Activated CD8-positive, alpha-beta T cell treated with anti-CD3 and anti-CD28 coated beads for 36 hours (primary cell): ENCODE measurements at regions of chr12 and their contacts with region 1.

Region 1: DNA sequence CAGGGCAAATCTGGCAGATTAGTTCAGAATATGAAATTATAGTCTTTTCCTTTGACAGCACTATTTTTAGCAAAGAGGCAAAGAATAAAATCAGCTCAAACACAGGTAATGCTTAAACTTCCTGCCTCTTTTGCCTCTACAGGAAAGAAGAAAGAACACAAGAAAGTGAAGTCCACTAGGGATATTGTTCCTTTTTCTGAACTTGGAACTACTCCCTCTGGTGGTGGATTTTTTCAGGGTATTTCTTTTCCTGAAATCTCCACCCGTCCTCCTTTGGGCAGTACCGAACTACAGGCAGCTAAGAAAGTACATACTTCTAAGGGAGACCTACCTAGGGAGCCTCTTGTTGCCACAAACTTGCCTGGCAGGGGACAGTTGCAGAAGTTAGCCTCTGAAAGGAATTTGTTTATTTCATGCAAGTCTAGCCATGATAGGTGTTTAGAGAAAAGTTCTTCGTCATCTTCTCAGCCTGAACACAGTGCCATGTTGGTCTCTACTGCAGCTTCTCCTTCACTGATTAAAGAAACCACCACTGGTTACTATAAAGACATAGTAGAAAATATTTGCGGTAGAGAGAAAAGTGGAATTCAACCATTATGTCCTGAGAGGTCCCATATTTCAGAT is 17.4 kb downstream of the TMPO start:
- DNase-seq: no peak
- ATAC-seq: peak; percentile 24
- H3K4me3 Mint-ChIP-seq: no peak overlapping the region
- H3K27ac Mint-ChIP-seq: peak overlapping the region; percentile 12
- H3K4me1 Mint-ChIP-seq: peaks cover 23% of the 10 kb centered on the region
- H3K27me3 Mint-ChIP-seq: no peaks in the 10 kb centered on the region
- CTCF ChIP-seq: peak; percentile 73

Region 2: GRCh38 chr12:98424726-98425401 is 107.9 kb before region 1 on chr12:
- CTCF ChIA-PET with region 1: interaction called, 10 read pairs
- POLR2A ChIA-PET with region 1: no interaction called
- intact Hi-C with region 1: loop called (anchors 5 kb)
- DNase-seq: peak; percentile 70
- ATAC-seq: peak; percentile 76
- H3K4me3 Mint-ChIP-seq: no peak overlapping the region
- H3K27ac Mint-ChIP-seq: no peak overlapping the region
- H3K4me1 Mint-ChIP-seq: peaks cover 4% of the 10 kb centered on the region
- H3K27me3 Mint-ChIP-seq: no peaks in the 10 kb centered on the region
- CTCF ChIP-seq: peak; percentile 82

Region 3: DNA sequence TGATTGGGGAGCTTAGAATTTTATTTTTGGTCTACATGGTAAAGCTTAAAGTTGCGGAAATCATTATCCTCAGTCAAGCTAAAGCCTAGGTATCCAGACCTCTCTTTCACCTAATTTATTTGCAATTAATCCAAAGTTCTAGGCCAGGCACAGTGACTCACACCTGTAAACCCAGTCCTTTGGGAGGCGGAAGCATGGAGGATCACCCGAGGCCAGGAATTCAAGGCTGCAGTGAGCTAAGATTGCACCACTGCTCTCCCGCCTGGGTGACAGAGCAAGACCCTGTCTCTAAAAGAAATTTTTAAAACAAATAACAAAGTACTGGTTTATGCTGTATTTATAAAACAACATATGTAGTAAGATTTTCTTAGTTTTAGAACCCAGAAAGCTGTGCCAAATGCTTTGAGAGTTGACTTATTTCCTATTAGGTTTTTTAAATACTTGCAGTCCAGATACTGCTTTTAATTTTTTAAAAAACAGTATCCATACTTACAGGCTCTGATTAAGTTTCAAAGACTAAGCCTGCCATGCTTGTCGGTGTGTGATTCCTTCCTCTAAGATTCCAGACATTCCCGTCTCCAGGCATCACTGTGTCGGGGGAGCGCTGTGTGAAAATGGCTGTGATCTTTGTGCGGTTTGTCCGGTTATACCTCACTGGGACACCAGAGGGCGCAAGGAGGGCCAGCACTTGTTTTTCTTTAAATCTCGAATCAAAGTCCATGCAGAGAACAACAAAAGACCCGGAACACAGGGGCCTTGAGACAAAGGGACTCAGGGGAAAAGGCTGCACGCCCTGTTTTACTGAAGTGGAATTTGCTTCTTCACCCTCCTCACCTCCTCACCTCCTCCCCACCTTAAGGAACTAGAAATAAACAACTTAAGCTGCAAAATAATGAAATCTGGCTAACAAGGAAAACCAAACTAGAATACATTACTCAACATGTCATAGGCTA is 42.0 kb before region 1 on chr12:
- CTCF ChIA-PET with region 1: interaction called, 37 read pairs
- POLR2A ChIA-PET with region 1: interaction called, 4 read pairs
- intact Hi-C with region 1: loop called (anchors 5 kb)
- DNase-seq: peak; percentile 90
- ATAC-seq: peak; percentile 97
- H3K4me3 Mint-ChIP-seq: peak overlapping the region; percentile 34
- H3K27ac Mint-ChIP-seq: peak overlapping the region; percentile 88
- H3K4me1 Mint-ChIP-seq: peaks cover 7% of the 10 kb centered on the region
- H3K27me3 Mint-ChIP-seq: no peaks in the 10 kb centered on the region
- CTCF ChIP-seq: peak; percentile 85

Region 4: DNA sequence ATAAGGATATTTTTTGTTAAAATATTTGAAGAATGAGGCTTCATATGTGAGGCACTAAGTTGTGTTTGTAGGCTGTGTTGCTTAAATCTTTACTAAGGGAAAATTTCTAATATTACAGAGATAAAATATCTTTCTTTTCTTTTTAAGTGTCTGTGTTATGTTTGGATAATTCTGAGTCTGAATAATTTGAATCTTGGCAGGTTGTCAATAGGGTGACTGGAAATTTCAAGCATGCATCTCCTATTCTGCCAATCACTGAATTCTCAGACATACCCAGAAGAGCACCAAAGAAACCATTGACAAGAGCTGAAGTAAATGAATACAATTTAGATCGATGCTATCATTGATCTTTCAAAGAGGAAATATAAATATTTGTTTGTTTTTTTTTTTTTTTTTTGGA is 12.0 kb after region 1 on chr12:
- CTCF ChIA-PET with region 1: interaction called, 11 read pairs
- POLR2A ChIA-PET with region 1: interaction called, 4 read pairs
- intact Hi-C with region 1: no loop called
- DNase-seq: no peak
- ATAC-seq: no peak
- H3K4me3 Mint-ChIP-seq: no peak overlapping the region
- H3K27ac Mint-ChIP-seq: no peak overlapping the region
- H3K4me1 Mint-ChIP-seq: peaks cover 14% of the 10 kb centered on the region
- H3K27me3 Mint-ChIP-seq: no peaks in the 10 kb centered on the region
- CTCF ChIP-seq: no peak

Region 5: DNA sequence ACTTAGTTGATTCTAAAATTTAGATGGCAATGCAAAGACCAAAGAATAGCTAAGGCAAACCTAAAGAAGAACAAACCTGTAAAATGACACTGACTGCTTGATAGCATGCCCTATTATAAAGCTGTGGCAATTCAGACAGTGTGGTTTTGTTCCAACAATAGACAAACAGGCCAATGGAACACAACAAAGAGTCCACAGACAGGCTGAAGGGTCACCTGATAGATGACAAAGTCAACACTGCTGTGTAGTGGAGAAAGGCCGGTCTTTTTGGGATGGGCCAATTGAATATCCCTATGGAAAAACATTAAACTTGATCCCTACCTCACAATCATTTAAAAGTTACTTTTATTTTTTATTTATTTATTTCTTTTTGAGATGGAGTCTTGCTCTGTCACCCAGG is 26.9 kb after region 1 on chr12:
- CTCF ChIA-PET with region 1: no interaction called
- POLR2A ChIA-PET with region 1: no interaction called
- intact Hi-C with region 1: no loop called
- DNase-seq: no peak
- ATAC-seq: no peak
- H3K4me3 Mint-ChIP-seq: no peak overlapping the region
- H3K27ac Mint-ChIP-seq: no peak overlapping the region
- H3K4me1 Mint-ChIP-seq: no peaks in the 10 kb centered on the region
- H3K27me3 Mint-ChIP-seq: no peaks in the 10 kb centered on the region
- CTCF ChIP-seq: no peak

Region 6: DNA sequence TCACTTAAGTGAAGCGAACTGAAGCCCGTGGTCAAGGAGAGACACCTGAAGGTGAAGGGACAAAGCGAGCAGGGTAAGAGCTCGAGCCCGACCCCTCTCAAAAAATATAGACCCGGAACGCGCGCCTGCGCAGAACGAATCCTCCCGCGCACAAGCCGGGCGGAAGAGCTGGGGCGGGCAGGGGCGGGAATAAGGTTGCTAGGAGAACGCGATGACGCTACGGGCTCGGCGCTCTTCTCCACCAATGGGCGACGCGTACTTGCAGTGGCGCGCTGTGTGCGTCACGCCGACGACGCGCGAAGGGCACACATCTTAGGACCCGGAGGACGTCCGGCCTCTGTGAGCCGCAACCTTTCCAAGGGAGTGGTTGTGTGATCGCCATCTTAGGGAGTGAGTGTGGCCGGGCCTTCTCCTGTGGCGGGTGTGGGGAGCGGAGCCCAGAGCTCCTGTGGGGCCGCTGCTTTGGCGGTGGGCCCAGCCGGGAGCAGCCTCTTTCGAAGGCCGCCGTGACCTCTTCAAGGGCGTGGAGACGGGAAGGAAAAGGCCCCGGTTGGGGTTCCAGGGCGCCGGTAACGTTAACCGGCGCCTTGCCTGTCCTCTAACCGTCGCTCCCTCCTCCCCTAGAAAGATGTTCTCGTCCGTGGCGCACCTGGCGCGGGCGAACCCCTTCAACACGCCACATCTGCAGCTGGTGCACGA is 60.7 kb after region 1 on chr12 and contains the start of gene SLC25A3:
- CTCF ChIA-PET with region 1: interaction called, 5 read pairs
- POLR2A ChIA-PET with region 1: interaction called, 10 read pairs
- intact Hi-C with region 1: no loop called
- DNase-seq: peak; percentile 94
- ATAC-seq: peak; percentile 97
- H3K4me3 Mint-ChIP-seq: peak within 1 kb of the TSS; percentile 98
- H3K27ac Mint-ChIP-seq: peak within 1 kb of the TSS; percentile 97
- H3K4me1 Mint-ChIP-seq: peaks cover 28% of the 10 kb centered on the region
- H3K27me3 Mint-ChIP-seq: no peaks in the 10 kb centered on the region
- CTCF ChIP-seq: no peak
- total RNA-seq, gene SLC25A3: 665 to 672 TPM

Region 7: DNA sequence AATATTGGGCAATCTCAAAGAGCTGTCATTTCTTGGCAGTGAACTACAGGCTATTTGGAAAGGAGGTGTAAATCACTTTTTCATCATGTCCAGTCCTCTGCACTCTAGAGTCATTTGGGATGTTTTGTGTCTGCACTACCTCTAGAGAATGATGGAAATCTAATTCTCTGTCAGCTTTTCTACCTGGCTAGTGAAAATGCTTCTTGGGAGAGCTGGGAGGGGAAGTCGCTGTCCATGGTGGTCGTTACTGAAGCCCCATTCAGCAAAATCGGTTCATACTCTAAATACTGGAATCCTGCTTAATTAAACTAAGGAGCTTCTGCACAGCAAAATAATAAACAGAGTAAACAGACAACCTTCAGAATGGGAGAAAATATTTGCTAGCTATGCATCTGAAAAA is 364.1 kb after region 1 on chr12:
- CTCF ChIA-PET with region 1: no interaction called
- POLR2A ChIA-PET with region 1: no interaction called
- intact Hi-C with region 1: no loop called
- DNase-seq: no peak
- ATAC-seq: no peak
- H3K4me3 Mint-ChIP-seq: no peak overlapping the region
- H3K27ac Mint-ChIP-seq: no peak overlapping the region
- H3K4me1 Mint-ChIP-seq: no peaks in the 10 kb centered on the region
- H3K27me3 Mint-ChIP-seq: peaks cover 38% of the 10 kb centered on the region
- CTCF ChIP-seq: no peak